ENCODE measurements at regions of chr17 and their contacts with region 1.

Region 1: GRCh38 chr17:4939796-4940624 is at the starts of genes RNF167 and SLC25A11:
- DNase-seq: peak; percentile 98
- ATAC-seq: peak; percentile 85
- H3K4me3 Mint-ChIP-seq: peak within 1 kb of the TSS; percentile 97
- H3K27ac Mint-ChIP-seq: peak within 1 kb of the TSS; percentile 98
- H3K4me1 Mint-ChIP-seq: peaks cover 57% of the 10 kb centered on the region
- H3K27me3 Mint-ChIP-seq: no peaks in the 10 kb centered on the region
- CTCF ChIP-seq: no peak
- total RNA-seq, gene RNF167: 144 to 152 TPM
- total RNA-seq, gene SLC25A11: 80.8 to 87.0 TPM

Region 2: GRCh38 chr17:4881761-4882555 is 58.1 kb before region 1 on chr17:
- CTCF ChIA-PET with region 1: no interaction called
- POLR2A ChIA-PET with region 1: no interaction called
- intact Hi-C with region 1: no loop called
- DNase-seq: peak; percentile 79
- ATAC-seq: peak; percentile 94
- H3K4me3 Mint-ChIP-seq: no peak overlapping the region
- H3K27ac Mint-ChIP-seq: no peak overlapping the region
- H3K4me1 Mint-ChIP-seq: no peaks in the 10 kb centered on the region
- H3K27me3 Mint-ChIP-seq: no peaks in the 10 kb centered on the region
- CTCF ChIP-seq: peak; percentile 94

Region 3: GRCh38 chr17:4903051-4903818 is 36.8 kb before region 1 on chr17 and contains the start of gene CHRNE:
- CTCF ChIA-PET with region 1: interaction called, 9 read pairs
- POLR2A ChIA-PET with region 1: interaction called, 41 read pairs
- intact Hi-C with region 1: no loop called
- DNase-seq: peak; percentile 91
- ATAC-seq: peak; percentile 52
- H3K4me3 Mint-ChIP-seq: peak within 1 kb of the TSS; percentile 34
- H3K27ac Mint-ChIP-seq: peak within 1 kb of the TSS; percentile 75
- H3K4me1 Mint-ChIP-seq: peaks cover 34% of the 10 kb centered on the region
- H3K27me3 Mint-ChIP-seq: no peaks in the 10 kb centered on the region
- CTCF ChIP-seq: peak; percentile 95
- total RNA-seq, gene CHRNE: 0.45 to 0.78 TPM

Region 4: GRCh38 chr17:4920351-4921048 is 19.5 kb before region 1 on chr17:
- CTCF ChIA-PET with region 1: interaction called, 3 read pairs
- POLR2A ChIA-PET with region 1: interaction called, 19 read pairs
- intact Hi-C with region 1: no loop called
- DNase-seq: no peak
- ATAC-seq: no peak
- H3K4me3 Mint-ChIP-seq: no peak overlapping the region
- H3K27ac Mint-ChIP-seq: no peak overlapping the region
- H3K4me1 Mint-ChIP-seq: no peaks in the 10 kb centered on the region
- H3K27me3 Mint-ChIP-seq: no peaks in the 10 kb centered on the region
- CTCF ChIP-seq: no peak

Region 5: DNA sequence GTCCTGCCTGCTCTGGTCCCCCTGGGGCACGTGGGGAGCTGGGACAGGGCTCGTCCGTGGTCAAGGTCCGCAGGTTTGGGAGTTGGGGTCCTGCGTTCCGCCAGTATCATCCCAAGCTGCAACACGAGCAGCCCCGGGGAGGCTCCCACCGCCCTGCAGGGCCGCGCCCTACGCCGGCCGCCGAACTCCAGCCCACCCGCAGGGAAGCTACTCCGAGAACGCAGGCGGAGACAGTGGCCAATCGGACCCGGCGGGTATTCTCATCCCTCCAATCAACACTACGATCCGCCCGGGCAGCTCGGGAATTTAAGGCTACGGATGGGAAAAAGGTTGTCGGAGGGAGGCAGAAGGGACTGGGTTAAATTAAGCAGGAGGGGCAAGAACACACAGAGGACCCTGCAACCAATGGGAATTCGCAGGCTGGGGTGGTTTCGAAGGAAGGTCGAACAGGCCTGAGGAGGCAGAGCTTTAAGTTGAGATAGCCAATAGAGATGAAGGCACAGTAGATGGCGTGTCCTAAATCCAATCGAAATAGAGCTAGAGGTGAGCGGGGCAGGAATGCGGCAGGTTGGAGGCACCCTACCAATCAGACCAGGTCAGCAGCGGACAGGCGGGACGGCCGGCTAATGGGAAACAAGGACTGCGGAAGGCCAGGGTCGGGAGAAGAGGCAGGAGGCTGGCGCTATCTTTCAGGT is 27.0 kb after region 1 on chr17:
- CTCF ChIA-PET with region 1: interaction called, 5 read pairs
- POLR2A ChIA-PET with region 1: interaction called, 627 read pairs
- intact Hi-C with region 1: loop called (anchors 2 kb)
- DNase-seq: peak; percentile 97
- ATAC-seq: peak; percentile 83
- H3K4me3 Mint-ChIP-seq: no peak overlapping the region
- H3K27ac Mint-ChIP-seq: no peak overlapping the region
- H3K4me1 Mint-ChIP-seq: peaks cover 35% of the 10 kb centered on the region
- H3K27me3 Mint-ChIP-seq: no peaks in the 10 kb centered on the region
- CTCF ChIP-seq: no peak